ENCODE measurements at regions of chr15 and their contacts with region 1.

Region 1: DNA sequence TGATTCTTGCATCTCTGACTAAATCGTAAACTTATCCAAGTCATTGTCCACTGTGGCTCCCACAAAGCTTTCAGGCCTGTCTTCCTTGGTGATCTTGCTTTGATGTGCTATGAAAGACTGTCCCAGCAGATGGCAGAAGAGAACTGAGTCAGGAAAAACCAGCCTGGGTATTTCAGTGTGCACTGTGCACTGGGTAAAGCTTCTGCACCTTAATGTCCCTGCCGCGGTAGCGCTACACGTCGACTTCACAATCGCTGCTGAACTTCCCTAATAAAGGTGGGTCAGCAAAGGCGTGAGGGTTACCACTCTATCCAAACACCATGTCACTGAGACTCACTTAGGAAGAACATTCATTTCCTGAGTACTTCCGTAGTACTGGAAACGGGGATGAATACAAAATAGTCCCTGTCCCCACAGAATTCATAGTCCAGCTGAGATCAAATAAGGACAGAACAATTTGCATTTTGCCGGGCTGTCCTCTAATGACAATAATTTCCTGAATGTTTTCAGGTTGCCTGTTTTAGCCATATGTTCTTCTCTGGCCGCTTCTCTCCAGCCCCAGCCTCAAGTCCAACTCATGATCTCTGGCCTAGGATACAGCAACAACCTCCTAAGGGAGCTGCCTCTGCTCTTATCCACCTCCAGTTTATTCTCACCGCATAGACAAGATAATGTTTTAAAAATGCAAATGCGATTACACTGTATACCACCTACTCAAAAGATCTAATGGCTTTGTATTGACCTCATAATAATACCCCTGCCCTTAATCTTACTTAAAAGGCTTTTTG is 83.6 kb upstream of the AKAP13 start:
- DNase-seq: peak; percentile 74
- H3K4me3 ChIP-seq: peak overlapping the region in 1 of 3 experiments; percentile 11
- H3K27ac ChIP-seq: no peak overlapping the region
- H3K4me1 ChIP-seq: peaks cover 7% of the 10 kb centered on the region
- H3K27me3 ChIP-seq: no peaks in the 10 kb centered on the region
- CTCF ChIP-seq: peak; percentile 80 to 81

Region 2: DNA sequence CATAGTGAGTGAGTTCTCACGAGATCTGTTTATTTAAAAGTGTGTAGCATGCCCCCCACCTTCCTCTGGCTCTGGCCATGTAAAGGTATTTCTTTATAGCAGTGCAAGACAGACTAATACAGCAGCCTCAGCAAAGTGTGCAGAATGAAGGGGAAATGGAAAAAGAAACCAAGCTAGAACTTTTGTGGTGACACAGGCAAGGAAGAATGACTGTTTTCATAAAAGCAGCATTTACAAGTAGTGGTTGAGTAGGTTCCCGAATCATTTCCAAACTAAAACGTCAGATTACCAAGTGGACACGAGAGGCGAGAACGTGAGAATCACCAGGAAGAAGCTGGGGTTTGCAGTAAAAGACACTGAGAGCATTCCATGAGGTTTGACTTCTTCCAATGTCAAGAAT is 16.6 kb before region 1 on chr15:
- CTCF ChIA-PET with region 1: no interaction called
- dilution Hi-C with region 1: no loop called
- in situ Hi-C with region 1: no loop called
- intact Hi-C with region 1: no loop called
- DNase-seq: no peak
- H3K4me3 ChIP-seq: no peak overlapping the region
- H3K27ac ChIP-seq: no peak overlapping the region
- H3K4me1 ChIP-seq: peaks cover 6% of the 10 kb centered on the region
- H3K27me3 ChIP-seq: no peaks in the 10 kb centered on the region
- CTCF ChIP-seq: no peak

Region 3: GRCh38 chr15:85330901-85331588 is 34.2 kb after region 1 on chr15:
- CTCF ChIA-PET with region 1: interaction called, 3 read pairs
- dilution Hi-C with region 1: no loop called
- in situ Hi-C with region 1: no loop called
- intact Hi-C with region 1: loop called (anchors 1 kb)
- DNase-seq: peak; percentile 93
- H3K4me3 ChIP-seq: no peak overlapping the region
- H3K27ac ChIP-seq: peak overlapping the region; percentile 61
- H3K4me1 ChIP-seq: peaks cover 20% of the 10 kb centered on the region
- H3K27me3 ChIP-seq: no peaks in the 10 kb centered on the region
- CTCF ChIP-seq: peak; percentile 96 to 100

Region 4: DNA sequence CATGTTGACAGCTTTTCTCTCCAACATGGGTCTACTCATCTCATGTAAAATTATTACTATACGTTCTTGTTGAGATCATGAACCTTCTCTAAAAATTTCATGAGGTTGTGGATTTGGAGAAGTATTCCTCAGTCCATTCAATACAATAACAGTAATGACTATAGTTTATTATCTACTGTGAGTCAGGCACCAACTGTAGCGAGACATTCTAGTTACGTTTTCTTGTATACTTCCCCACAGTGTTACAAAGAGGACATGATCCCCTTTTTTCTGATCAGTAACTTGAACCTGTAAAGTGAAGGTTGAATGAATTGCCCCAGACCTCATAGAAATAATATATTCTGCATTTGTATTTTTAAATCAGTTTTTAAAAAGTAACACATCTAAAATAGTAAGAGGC is 160.0 kb after region 1 on chr15:
- CTCF ChIA-PET with region 1: interaction called, 11 read pairs
- dilution Hi-C with region 1: no loop called
- in situ Hi-C with region 1: no loop called
- intact Hi-C with region 1: no loop called
- DNase-seq: no peak
- H3K4me3 ChIP-seq: no peak overlapping the region
- H3K27ac ChIP-seq: no peak overlapping the region
- H3K4me1 ChIP-seq: peaks cover 12% of the 10 kb centered on the region
- H3K27me3 ChIP-seq: no peaks in the 10 kb centered on the region
- CTCF ChIP-seq: no peak

Region 5: DNA sequence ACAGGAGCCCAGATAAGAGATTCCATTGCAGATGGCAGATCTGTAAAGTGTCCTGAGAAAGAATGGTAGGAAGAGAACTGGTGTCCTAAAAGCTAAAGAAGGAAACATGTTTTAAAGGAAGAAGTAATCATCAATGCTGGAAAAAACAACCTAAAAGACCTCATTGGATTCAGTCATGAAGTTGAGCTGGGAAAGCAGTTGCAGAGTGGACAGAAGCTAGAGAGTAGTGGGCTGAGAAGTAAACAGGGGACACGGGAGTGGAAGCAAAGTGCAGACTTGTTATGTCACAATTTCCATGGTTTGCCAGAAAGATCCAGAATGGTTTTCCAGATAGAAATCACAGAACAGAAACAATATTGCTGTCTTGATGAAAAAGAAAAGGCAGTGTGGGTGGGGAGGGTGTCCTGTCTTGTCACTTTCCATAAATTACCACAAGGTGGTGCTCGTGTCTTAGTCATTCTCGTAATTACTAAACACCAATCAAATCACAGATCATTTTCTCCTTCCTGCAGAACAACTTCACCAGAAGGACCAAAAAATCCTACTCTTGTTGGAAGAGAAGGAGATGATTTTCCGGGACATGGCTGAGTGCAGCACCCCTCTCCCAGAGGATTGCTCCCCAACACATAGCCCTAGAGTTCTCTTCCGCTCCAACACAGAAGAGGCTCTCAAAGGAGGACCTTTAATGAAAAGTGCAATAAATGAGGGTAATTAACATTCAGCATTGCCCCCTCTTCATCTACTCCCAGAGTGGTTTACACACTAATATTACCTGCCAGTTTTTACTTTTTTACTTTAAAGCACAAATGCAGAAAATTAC is 433.4 kb after region 1 on chr15:
- CTCF ChIA-PET with region 1: no interaction called
- dilution Hi-C with region 1: no loop called
- in situ Hi-C with region 1: no loop called
- intact Hi-C with region 1: loop called (anchors 5 kb)
- DNase-seq: peak; percentile 53
- H3K4me3 ChIP-seq: no peak overlapping the region
- H3K27ac ChIP-seq: no peak overlapping the region
- H3K4me1 ChIP-seq: peaks cover 6% of the 10 kb centered on the region
- H3K27me3 ChIP-seq: no peaks in the 10 kb centered on the region
- CTCF ChIP-seq: peak; percentile 62 to 78

Region 6: DNA sequence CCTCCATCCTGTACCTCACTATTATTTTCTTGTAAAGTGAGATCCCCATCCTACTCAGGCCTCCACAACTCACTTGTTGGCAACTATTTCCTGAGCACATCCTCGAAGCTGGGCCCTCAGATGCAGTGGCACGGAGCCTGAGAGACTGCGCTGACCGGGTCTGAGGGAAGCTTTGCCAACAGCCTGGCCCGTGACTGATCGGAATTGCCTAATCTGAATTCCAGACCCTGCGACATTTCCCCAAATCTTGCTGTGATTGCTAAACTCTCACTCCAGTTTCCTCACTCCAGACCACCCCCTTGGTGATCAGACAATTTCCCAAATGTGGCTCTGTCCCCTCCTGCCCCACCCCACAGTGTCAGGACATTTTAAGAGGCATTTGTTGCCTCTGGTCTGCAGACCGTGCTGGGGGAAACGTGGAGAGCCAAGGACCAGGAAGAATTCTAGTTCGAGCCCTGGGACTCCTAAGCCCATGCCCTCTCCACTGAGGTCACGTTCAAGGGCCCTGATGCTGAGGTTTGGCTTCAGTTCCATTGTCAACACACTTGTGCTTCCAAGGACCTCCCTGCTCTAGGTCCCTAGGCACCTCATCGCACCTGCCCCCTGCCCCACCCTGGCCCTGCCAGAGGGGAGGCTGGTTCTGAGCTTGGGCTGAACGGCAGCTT is 475.1 kb after region 1 on chr15:
- CTCF ChIA-PET with region 1: no interaction called
- dilution Hi-C with region 1: no loop called
- in situ Hi-C with region 1: no loop called
- intact Hi-C with region 1: no loop called
- DNase-seq: no peak
- H3K4me3 ChIP-seq: no peak overlapping the region
- H3K27ac ChIP-seq: peak overlapping the region; percentile 42
- H3K4me1 ChIP-seq: peaks cover 28% of the 10 kb centered on the region
- H3K27me3 ChIP-seq: no peaks in the 10 kb centered on the region
- CTCF ChIP-seq: no peak

Measured in mammary epithelial cell (primary cell).